CD8-positive, alpha-beta memory T cell (primary cell): ENCODE measurements at regions of chr2 and their contacts with region 1.

Region 1: GRCh38 chr2:54522624-54523281 is 66.6 kb downstream of the SPTBN1 start:
- DNase-seq: peak; percentile 36 to 75 (median 68)
- H3K4me3 ChIP-seq: no peak overlapping the region
- H3K4me3 Mint-ChIP-seq: peak overlapping the region in 4 of 7 donors; percentile 23 to 57 (median 42)
- H3K27ac ChIP-seq: no peak overlapping the region
- H3K27ac Mint-ChIP-seq: peak overlapping the region in 5 of 8 donors; percentile 1 to 93 (median 64)
- H3K4me1 ChIP-seq: no peaks in the 10 kb centered on the region
- H3K4me1 Mint-ChIP-seq: peaks cover 4 to 9% (median 4%) of the 10 kb centered on the region in 3 donors
- H3K27me3 ChIP-seq: no peaks in the 10 kb centered on the region
- H3K27me3 Mint-ChIP-seq: peaks cover 2 to 13% of the 10 kb centered on the region in 2 donors

Region 2: DNA sequence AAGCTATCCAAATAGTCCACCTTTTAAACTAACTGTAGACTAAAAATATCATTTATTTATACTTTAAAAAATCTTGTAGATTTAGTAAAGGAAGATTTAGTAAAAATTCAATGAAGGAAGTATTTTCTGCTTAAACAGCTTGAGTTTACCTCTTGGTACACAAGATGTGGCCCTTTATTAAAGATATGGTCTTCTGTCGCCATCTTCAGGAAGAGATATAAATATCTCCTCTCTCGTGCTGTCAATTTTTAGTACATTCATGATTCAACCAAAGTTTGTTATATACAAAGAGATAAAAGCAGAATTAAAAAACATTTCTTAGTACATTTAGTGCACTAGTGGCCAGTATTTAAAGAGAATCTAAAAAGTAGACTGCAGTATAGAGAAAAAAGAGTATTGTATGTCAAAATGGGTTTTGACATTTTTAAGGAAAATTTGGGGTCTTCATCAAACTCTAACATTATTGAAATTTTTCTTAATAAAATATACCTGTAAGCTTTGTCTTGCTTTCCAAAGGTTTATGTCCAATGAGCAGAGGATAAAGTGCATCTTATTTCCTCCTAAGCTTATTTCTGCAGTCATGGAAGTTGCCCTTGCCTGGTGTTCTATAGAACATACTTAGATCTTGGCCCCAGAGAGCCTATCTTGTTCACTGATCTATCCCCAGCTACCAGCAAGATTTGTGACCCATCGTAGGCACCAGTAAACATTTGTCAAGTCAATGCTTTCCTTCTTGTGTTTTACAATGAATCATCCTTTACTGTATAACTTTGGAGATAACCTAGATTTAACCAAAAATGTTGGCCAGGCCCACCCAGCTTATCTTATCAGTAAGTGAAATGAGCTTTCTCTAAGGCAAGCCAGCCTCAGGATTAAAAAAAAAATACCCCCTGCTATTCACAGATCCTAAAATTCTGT is 182.2 kb after region 1 on chr2:
- CTCF ChIA-PET with region 1: interaction called, 149 read pairs
- POLR2A ChIA-PET with region 1: interaction called, 3 read pairs
- DNase-seq: peak in 2 of 5 donors; percentile 42 to 49
- H3K4me3 ChIP-seq: no peak overlapping the region
- H3K4me3 Mint-ChIP-seq: no peak overlapping the region
- H3K27ac ChIP-seq: no peak overlapping the region
- H3K27ac Mint-ChIP-seq: no peak overlapping the region
- H3K4me1 ChIP-seq: no peaks in the 10 kb centered on the region
- H3K4me1 Mint-ChIP-seq: no peaks in the 10 kb centered on the region
- H3K27me3 ChIP-seq: peaks cover 5% of the 10 kb centered on the region
- H3K27me3 Mint-ChIP-seq: peaks cover 7 to 15% of the 10 kb centered on the region in 2 donors